ENCODE measurements at regions of chrX and their contacts with region 1.

Region 1: GRCh38 chrX:15737960-15738902 is at the start of gene CA5B:
- DNase-seq: peak; percentile 93
- H3K4me3 Mint-ChIP-seq: peak within 1 kb of the TSS; percentile 86
- H3K27ac Mint-ChIP-seq: peak within 1 kb of the TSS; percentile 77
- H3K4me1 Mint-ChIP-seq: peaks cover 20% of the 10 kb centered on the region
- H3K27me3 Mint-ChIP-seq: no peaks in the 10 kb centered on the region
- total RNA-seq, gene CA5B: 3.8 and 6.9 TPM in 2 replicates

Region 2: DNA sequence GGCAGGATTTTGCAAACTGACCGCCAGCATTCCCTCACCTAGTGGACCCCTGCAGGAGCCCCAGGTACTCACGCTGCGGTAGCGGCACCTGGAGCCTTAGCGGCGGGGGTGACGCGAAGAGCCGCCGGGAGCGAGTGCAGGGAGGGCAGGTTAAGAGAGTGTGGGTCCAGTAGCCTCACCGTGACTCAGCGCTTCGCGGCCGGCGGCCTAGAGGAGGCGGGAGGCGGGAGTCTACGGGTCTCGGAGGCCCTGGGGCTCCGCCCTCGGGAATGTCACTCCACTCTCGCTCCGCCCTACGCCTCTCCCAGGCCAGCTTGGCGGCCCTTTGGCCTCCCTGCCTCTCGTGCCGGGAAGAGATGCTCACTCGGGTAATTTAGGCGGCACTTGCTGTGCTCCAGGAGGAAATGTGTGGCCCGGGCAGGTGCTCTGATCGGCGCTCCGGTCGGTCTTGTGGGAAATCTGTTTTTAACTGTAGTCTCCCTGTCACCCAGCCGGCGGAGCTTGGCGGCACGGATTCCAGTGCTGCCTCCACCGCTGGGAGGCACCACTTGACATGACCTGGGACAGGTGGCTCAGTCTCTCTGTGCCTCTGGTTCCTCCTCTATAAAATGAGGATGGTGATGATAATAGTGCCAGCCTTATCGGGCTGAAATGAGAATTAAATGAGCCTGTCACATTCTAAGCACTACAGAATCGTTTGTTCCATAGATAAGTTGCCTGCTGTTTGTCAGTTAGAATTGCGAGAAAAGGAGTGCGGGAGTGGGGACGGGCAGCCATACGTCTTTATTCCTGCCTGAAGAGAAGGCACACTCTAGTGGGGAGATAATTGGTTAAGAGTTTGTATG is 244.9 kb before region 1 on chrX and contains the start of gene PIR:
- intact Hi-C with region 1: loop called (anchors 10 kb)
- DNase-seq: peak; percentile 54
- H3K4me3 Mint-ChIP-seq: peak within 1 kb of the TSS; percentile 86
- H3K27ac Mint-ChIP-seq: peak within 1 kb of the TSS; percentile 65
- H3K4me1 Mint-ChIP-seq: peaks cover 21% of the 10 kb centered on the region
- H3K27me3 Mint-ChIP-seq: peaks cover 6% of the 10 kb centered on the region
- total RNA-seq, gene PIR: 4.3 and 4.9 TPM in 2 replicates

Region 3: DNA sequence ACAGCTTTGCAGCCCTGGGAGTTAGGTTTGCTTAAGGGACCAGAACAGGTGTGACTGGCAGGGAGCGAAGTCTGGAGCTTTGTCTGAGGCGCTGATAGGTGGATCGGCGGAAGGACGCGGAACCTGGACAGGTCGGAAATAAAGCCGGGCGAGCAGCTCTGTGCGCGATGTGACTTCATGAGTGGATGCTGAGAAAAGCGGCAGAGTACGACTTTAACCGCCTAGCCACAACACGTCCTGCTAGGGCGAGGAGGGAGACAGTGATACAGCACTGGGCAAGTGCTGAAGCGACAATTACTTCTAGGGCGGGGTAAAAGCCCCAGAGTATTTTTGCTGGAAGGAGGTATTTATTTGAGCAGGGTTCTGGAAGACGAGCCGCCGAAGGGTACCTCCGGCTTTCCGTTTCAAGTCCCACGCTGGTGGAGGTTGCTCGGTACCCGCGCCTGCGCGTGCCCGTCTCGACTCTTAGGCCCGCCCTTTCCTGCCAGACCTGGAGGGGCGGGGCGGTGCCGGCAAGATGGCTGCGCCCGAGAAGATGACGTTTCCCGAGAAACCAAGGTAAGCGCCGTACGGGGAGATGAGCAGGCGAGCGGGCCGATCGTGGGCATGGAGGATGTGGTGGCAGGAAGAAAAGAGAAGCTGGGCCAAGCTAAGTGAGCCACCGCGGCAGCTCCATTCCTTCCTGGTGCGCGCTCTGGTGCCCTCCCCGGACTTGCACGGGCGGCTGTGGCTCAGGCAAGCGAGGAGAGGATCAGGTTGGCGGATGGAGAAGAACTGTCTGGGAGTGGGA is 51.9 kb after region 1 on chrX and contains the start of gene ZRSR2:
- intact Hi-C with region 1: loop called (anchors 1 kb)
- DNase-seq: peak; percentile 83
- H3K4me3 Mint-ChIP-seq: no peak within 1 kb of the TSS
- H3K27ac Mint-ChIP-seq: no peak within 1 kb of the TSS
- H3K4me1 Mint-ChIP-seq: peaks cover 18% of the 10 kb centered on the region
- H3K27me3 Mint-ChIP-seq: no peaks in the 10 kb centered on the region
- total RNA-seq, gene ZRSR2: 20.6 and 22.1 TPM in 2 replicates

Region 4: GRCh38 chrX:16719334-16720084 is 981.3 kb after region 1 on chrX and contains the start of gene SYAP1:
- intact Hi-C with region 1: loop called (anchors 1 kb)
- DNase-seq: peak; percentile 89
- H3K4me3 Mint-ChIP-seq: peak within 1 kb of the TSS; percentile 92
- H3K27ac Mint-ChIP-seq: peak within 1 kb of the TSS; percentile 94
- H3K4me1 Mint-ChIP-seq: peaks cover 16% of the 10 kb centered on the region
- H3K27me3 Mint-ChIP-seq: no peaks in the 10 kb centered on the region
- total RNA-seq, gene SYAP1: 19.5 and 19.7 TPM in 2 replicates